Aorta (tissue), 5 donors: ENCODE measurements at regions of chr4 and their contacts with region 1.

Region 1: GRCh38 chr4:137583671-137584070 is 51.4 kb upstream of the PCDH18 start:
- DNase-seq: no peak
- ATAC-seq: no peak
- H3K4me3 ChIP-seq: no peak overlapping the region
- H3K27ac ChIP-seq: no peak overlapping the region
- H3K4me1 ChIP-seq: no peaks in the 10 kb centered on the region
- H3K27me3 ChIP-seq: no peaks in the 10 kb centered on the region

Region 2: GRCh38 chr4:137660211-137660610 is 76.5 kb after region 1 on chr4:
- intact Hi-C with region 1: loop called in 1 of 2 experiments (anchors 2 kb)
- DNase-seq: no peak
- ATAC-seq: no peak
- H3K4me3 ChIP-seq: no peak overlapping the region
- H3K27ac ChIP-seq: peak overlapping the region in 1 of 2 donors; percentile 36
- H3K4me1 ChIP-seq: peaks cover 3 to 5% of the 10 kb centered on the region in 2 donors
- H3K27me3 ChIP-seq: no peaks in the 10 kb centered on the region